T-cell (primary cell): ENCODE measurements at regions of chr2 and their contacts with region 1.

Region 1: GRCh38 chr2:171390941-171391516 is 42.8 kb downstream of the METTL8 start:
- DNase-seq: no peak
- ATAC-seq: no peak
- H3K4me3 ChIP-seq: no peak overlapping the region
- H3K4me3 Mint-ChIP-seq: no peak overlapping the region
- H3K27ac ChIP-seq: no peak overlapping the region
- H3K27ac Mint-ChIP-seq: no peak overlapping the region
- H3K4me1 ChIP-seq: no peaks in the 10 kb centered on the region
- H3K4me1 Mint-ChIP-seq: peaks cover 8 to 19% (median 9%) of the 10 kb centered on the region in 3 donors
- H3K27me3 ChIP-seq: no peaks in the 10 kb centered on the region
- H3K27me3 Mint-ChIP-seq: no peaks in the 10 kb centered on the region

Region 2: DNA sequence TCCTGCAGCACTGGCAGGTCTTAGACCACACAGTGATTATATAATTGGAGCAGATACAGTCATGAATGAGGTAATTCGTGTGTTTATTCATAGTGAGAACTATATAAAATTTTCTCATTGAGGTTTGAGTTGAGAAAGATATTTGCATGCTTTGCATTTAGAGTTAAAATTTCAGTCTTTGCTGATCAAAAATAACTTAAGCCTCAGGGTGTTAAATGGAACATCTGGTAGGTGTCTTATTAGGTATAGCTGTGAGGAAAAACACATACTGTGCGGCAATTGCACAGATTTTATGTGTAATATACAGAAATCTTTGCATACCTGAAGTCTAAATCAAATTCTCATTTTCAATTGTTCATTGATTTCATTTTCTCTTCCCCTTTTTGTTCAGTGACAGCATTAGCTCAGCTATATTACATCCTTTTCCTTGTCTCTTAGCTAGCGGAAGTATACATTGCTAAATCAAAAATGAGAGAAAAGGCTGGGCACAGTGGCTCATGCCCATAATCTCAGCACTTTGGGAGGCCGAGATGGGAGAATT is 440.7 kb before region 1 on chr2:
- CTCF ChIA-PET with region 1: no interaction called
- POLR2A ChIA-PET with region 1: interaction called in 1 of 2 experiments, 10 read pairs
- DNase-seq: no peak
- ATAC-seq: no peak
- H3K4me3 ChIP-seq: no peak overlapping the region
- H3K4me3 Mint-ChIP-seq: no peak overlapping the region
- H3K27ac ChIP-seq: no peak overlapping the region
- H3K27ac Mint-ChIP-seq: no peak overlapping the region
- H3K4me1 ChIP-seq: no peaks in the 10 kb centered on the region
- H3K4me1 Mint-ChIP-seq: peaks cover 7 to 18% (median 12%) of the 10 kb centered on the region in 3 donors
- H3K27me3 ChIP-seq: no peaks in the 10 kb centered on the region
- H3K27me3 Mint-ChIP-seq: no peaks in the 10 kb centered on the region

Region 3: GRCh38 chr2:171180229-171180930 is 210.6 kb before region 1 on chr2:
- CTCF ChIA-PET with region 1: no interaction called
- POLR2A ChIA-PET with region 1: interaction called in 1 of 2 experiments, 11 read pairs
- DNase-seq: no peak
- ATAC-seq: no peak
- H3K4me3 ChIP-seq: no peak overlapping the region
- H3K4me3 Mint-ChIP-seq: no peak overlapping the region
- H3K27ac ChIP-seq: no peak overlapping the region
- H3K27ac Mint-ChIP-seq: no peak overlapping the region
- H3K4me1 ChIP-seq: no peaks in the 10 kb centered on the region
- H3K4me1 Mint-ChIP-seq: no peaks in the 10 kb centered on the region
- H3K27me3 ChIP-seq: no peaks in the 10 kb centered on the region
- H3K27me3 Mint-ChIP-seq: peaks cover 0 to 9% of the 10 kb centered on the region in 2 donors